Astrocyte of the cerebellum (primary cell): ENCODE measurements at regions of chr3 and their contacts with region 1.

Region 1: GRCh38 chr3:107833043-107833442 is 257.8 kb downstream of the CD47 start:
- DNase-seq: no peak
- H3K4me3 ChIP-seq: no peak overlapping the region
- CTCF ChIP-seq: no peak

Region 2: DNA sequence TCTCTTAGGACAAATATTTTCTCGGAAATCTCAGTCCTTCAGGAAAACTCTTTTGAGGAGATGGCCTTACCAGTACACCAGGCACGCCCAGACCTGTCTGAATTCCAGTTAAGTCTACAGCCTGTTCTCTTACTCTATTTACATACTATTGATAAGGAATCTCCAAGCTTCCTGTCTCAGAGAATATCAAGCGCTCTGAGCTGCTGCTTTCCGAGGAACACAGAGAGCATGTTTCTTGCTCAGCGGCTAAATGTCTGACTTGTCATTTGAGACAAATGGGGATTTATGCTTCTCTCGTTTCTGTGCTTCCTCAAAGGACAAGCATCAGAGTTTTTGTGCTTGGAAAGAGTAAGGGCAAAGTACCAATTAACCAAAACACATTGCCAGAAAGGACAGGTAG is 568.2 kb before region 1 on chr3:
- in situ Hi-C with region 1: no loop called
- DNase-seq: no peak
- H3K4me3 ChIP-seq: no peak overlapping the region
- CTCF ChIP-seq: no peak

Region 3: GRCh38 chr3:107897471-107898061 is 64.5 kb after region 1 on chr3:
- in situ Hi-C with region 1: loop called (anchors 10 kb)
- DNase-seq: no peak
- H3K4me3 ChIP-seq: no peak overlapping the region
- CTCF ChIP-seq: no peak